A673 (cell line): ENCODE measurements at regions of chr1 and their contacts with region 1.

Region 1: GRCh38 chr1:27556781-27557595 is 47.0 kb downstream of the AHDC1 start:
- DNase-seq: peak; percentile 97
- H3K4me3 ChIP-seq: peak overlapping the region; percentile 26
- H3K27ac ChIP-seq: peak overlapping the region; percentile 11
- H3K4me1 ChIP-seq: peaks cover 54% of the 10 kb centered on the region
- H3K27me3 ChIP-seq: no peaks in the 10 kb centered on the region
- CTCF ChIP-seq: peak; percentile 93

Region 2: DNA sequence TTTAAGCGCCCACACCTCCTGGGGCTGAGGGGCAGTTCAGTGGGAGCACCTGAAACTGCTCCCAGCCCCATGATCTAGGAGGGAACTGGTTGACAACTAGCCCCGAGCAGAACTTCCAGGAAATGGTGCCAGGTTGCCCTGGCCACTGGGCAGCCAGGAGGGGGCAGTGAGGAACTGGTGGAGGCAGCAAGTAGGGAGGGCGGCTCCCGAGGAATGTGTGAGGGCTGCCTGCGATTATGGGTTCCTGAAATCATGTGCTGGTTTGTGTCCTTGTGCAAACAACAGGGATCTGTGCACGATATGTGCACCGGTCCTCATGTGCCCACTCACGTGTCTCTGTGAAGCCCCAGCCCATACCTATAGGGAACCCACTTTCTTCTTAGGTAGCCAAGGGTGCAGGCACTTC is 154.6 kb before region 1 on chr1:
- CTCF ChIA-PET with region 1: interaction called, 10 read pairs
- POLR2A ChIA-PET with region 1: no interaction called
- intact Hi-C with region 1: no loop called
- DNase-seq: peak; percentile 45
- H3K4me3 ChIP-seq: no peak overlapping the region
- H3K27ac ChIP-seq: no peak overlapping the region
- H3K4me1 ChIP-seq: no peaks in the 10 kb centered on the region
- H3K27me3 ChIP-seq: no peaks in the 10 kb centered on the region
- CTCF ChIP-seq: peak; percentile 45

Region 3: GRCh38 chr1:27568300-27569087 is 11.5 kb after region 1 on chr1:
- CTCF ChIA-PET with region 1: interaction called, 33 read pairs
- POLR2A ChIA-PET with region 1: no interaction called
- intact Hi-C with region 1: no loop called
- DNase-seq: peak; percentile 98
- H3K4me3 ChIP-seq: peak overlapping the region; percentile 37
- H3K27ac ChIP-seq: peak overlapping the region; percentile 2
- H3K4me1 ChIP-seq: peaks cover 37% of the 10 kb centered on the region
- H3K27me3 ChIP-seq: no peaks in the 10 kb centered on the region
- CTCF ChIP-seq: peak; percentile 71

Region 4: DNA sequence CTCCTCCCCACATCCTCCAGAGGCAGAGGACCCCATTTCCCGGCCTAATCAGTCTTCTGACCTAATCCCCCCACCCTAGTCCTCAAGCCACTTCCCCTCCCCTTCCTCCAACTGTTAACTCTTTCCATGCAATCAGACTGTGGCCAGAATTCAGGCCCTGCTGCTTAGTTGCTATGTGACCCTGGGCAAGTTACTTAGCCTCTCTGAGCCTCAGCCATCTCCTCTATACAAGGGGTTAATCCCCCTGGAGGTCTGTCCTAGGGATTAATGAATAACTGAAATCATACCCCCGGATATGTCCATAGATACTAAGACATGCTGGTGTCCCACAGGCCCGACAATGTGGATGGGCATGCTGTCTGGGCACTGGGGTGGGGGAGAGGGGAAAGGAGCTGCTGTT is 28.7 kb after region 1 on chr1:
- CTCF ChIA-PET with region 1: interaction called, 12 read pairs
- POLR2A ChIA-PET with region 1: no interaction called
- intact Hi-C with region 1: no loop called
- DNase-seq: no peak
- H3K4me3 ChIP-seq: no peak overlapping the region
- H3K27ac ChIP-seq: no peak overlapping the region
- H3K4me1 ChIP-seq: peaks cover 24% of the 10 kb centered on the region
- H3K27me3 ChIP-seq: no peaks in the 10 kb centered on the region
- CTCF ChIP-seq: no peak